Caco-2 (cell line): ENCODE measurements at regions of chr11 and their contacts with region 1.

Region 1: GRCh38 chr11:126716456-126717083 is 284.0 kb downstream of the KIRREL3 start:
- DNase-seq: peak in 1 of 2 experiments; percentile 71
- H3K4me3 ChIP-seq: no peak overlapping the region
- H3K4me3 Mint-ChIP-seq: no peak overlapping the region
- H3K27ac Mint-ChIP-seq: no peak overlapping the region
- H3K4me1 ChIP-seq: no peaks in the 10 kb centered on the region
- H3K4me1 Mint-ChIP-seq: no peaks in the 10 kb centered on the region
- H3K27me3 ChIP-seq: 0 out of 2 replicates have a peak, but pooled peaks cover 3% of the 10 kb centered on the region
- H3K27me3 Mint-ChIP-seq: peaks cover 36% of the 10 kb centered on the region
- CTCF ChIP-seq: peak; percentile 80 to 86

Region 2: DNA sequence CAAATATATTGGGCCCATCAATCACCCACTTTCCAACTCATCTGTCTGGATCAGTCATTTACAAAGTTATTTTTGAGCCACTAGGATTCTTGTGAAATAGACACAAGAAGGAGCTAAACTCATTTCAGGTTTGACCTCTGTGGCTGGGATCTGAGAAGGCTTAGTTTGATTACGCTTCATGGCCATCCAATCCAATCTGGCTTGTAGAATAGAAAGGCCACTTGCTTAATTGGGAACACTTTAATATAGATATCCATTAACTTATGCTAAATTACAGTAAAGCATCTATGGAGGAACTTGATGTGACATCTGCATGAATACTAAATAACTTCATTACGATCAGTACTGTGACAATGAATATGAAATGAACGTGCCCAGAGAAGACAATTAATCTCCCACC is 76.9 kb before region 1 on chr11:
- CTCF ChIA-PET with region 1: interaction called, 10 read pairs
- POLR2A ChIA-PET with region 1: no interaction called
- intact Hi-C with region 1: no loop called
- DNase-seq: no peak
- H3K4me3 ChIP-seq: no peak overlapping the region
- H3K4me3 Mint-ChIP-seq: no peak overlapping the region
- H3K27ac Mint-ChIP-seq: no peak overlapping the region
- H3K4me1 ChIP-seq: no peaks in the 10 kb centered on the region; the same call in 1 of the 2 replicates
- H3K4me1 Mint-ChIP-seq: no peaks in the 10 kb centered on the region
- H3K27me3 ChIP-seq: no peaks in the 10 kb centered on the region; the same call in 1 of the 2 replicates
- H3K27me3 Mint-ChIP-seq: peaks cover 16% of the 10 kb centered on the region
- CTCF ChIP-seq: no peak

Region 3: GRCh38 chr11:126969865-126970479 is 253.4 kb after region 1 on chr11:
- CTCF ChIA-PET with region 1: no interaction called
- POLR2A ChIA-PET with region 1: no interaction called
- intact Hi-C with region 1: loop called (anchors 5 kb)
- DNase-seq: peak in 1 of 2 experiments; percentile 28
- H3K4me3 ChIP-seq: no peak overlapping the region
- H3K4me3 Mint-ChIP-seq: no peak overlapping the region
- H3K27ac Mint-ChIP-seq: no peak overlapping the region
- H3K4me1 ChIP-seq: no peaks in the 10 kb centered on the region
- H3K4me1 Mint-ChIP-seq: no peaks in the 10 kb centered on the region
- H3K27me3 ChIP-seq: 0 out of 2 replicates have a peak, but pooled peaks cover 2% of the 10 kb centered on the region
- H3K27me3 Mint-ChIP-seq: peaks cover 20% of the 10 kb centered on the region
- CTCF ChIP-seq: peak; percentile 60 to 61

Region 4: GRCh38 chr11:126989942-126990715 is 273.6 kb after region 1 on chr11:
- CTCF ChIA-PET with region 1: interaction called, 9 read pairs
- POLR2A ChIA-PET with region 1: no interaction called
- intact Hi-C with region 1: loop called (anchors 1 kb)
- DNase-seq: peak; percentile 83 to 84
- H3K4me3 ChIP-seq: no peak overlapping the region
- H3K4me3 Mint-ChIP-seq: no peak overlapping the region
- H3K27ac Mint-ChIP-seq: no peak overlapping the region
- H3K4me1 ChIP-seq: no peaks in the 10 kb centered on the region
- H3K4me1 Mint-ChIP-seq: no peaks in the 10 kb centered on the region
- H3K27me3 ChIP-seq: no peaks in the 10 kb centered on the region
- H3K27me3 Mint-ChIP-seq: peaks cover 36% of the 10 kb centered on the region
- CTCF ChIP-seq: peak; percentile 98 to 99

Region 5: GRCh38 chr11:127074151-127074761 is 357.7 kb after region 1 on chr11:
- CTCF ChIA-PET with region 1: interaction called, 15 read pairs
- POLR2A ChIA-PET with region 1: no interaction called
- intact Hi-C with region 1: loop called (anchors 1 kb)
- DNase-seq: peak; percentile 59 to 67
- H3K4me3 ChIP-seq: no peak overlapping the region
- H3K4me3 Mint-ChIP-seq: no peak overlapping the region
- H3K27ac Mint-ChIP-seq: no peak overlapping the region
- H3K4me1 ChIP-seq: no peaks in the 10 kb centered on the region
- H3K4me1 Mint-ChIP-seq: no peaks in the 10 kb centered on the region
- H3K27me3 ChIP-seq: no peaks in the 10 kb centered on the region; the same call in 1 of the 2 replicates
- H3K27me3 Mint-ChIP-seq: peaks cover 21% of the 10 kb centered on the region
- CTCF ChIP-seq: peak; percentile 60 to 79

Region 6: DNA sequence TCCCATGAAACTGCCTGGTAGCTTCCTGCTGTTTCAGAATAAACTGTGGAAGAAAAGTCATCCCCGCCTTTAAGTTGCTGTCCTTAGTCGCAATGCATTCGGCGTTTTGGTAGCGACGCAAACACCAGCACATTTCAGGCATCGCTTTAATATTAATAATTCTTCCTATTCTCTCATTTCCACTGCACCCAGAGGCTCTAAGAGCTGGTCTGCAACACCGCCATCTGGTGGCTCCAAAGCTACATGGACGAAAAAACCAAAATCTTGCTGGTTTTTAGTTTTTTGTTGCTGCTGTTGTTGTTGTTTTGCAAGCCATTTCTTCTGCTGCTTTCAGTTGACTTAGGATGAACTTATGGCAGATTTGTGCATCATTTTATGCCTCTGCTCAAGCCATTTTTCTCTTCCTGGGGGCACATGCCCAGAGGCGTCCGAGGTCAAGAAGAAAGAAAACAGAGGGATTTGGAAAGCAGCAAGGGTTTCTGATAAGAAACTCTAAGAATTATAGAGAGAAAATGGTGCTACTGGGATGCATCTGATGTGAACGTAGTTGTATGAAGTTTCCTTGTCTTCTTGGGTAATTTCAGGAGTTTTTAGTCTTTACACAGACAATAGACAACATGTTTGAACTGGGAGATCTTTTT is 629.4 kb after region 1 on chr11:
- CTCF ChIA-PET with region 1: no interaction called
- POLR2A ChIA-PET with region 1: no interaction called
- intact Hi-C with region 1: loop called (anchors 2 kb)
- DNase-seq: peak in 1 of 2 experiments; percentile 51
- H3K4me3 ChIP-seq: no peak overlapping the region
- H3K4me3 Mint-ChIP-seq: no peak overlapping the region
- H3K27ac Mint-ChIP-seq: no peak overlapping the region
- H3K4me1 ChIP-seq: no peaks in the 10 kb centered on the region
- H3K4me1 Mint-ChIP-seq: no peaks in the 10 kb centered on the region
- H3K27me3 ChIP-seq: no peaks in the 10 kb centered on the region
- H3K27me3 Mint-ChIP-seq: peaks cover 1% of the 10 kb centered on the region
- CTCF ChIP-seq: peak; percentile 83 to 95